ENCODE measurements at regions of chr6 and their contacts with region 1.

Region 1: GRCh38 chr6:140500849-140501248 is 1126.4 kb upstream of the CITED2 start:
- DNase-seq: no peak
- ATAC-seq: no peak

Region 2: GRCh38 chr6:140138311-140139010 is 362.4 kb before region 1 on chr6:
- intact Hi-C with region 1: no loop called
- DNase-seq: no peak
- ATAC-seq: peak; percentile 39

Region 3: GRCh38 chr6:140289186-140289585 is 211.7 kb before region 1 on chr6:
- intact Hi-C with region 1: no loop called
- DNase-seq: no peak
- ATAC-seq: no peak

Region 4: DNA sequence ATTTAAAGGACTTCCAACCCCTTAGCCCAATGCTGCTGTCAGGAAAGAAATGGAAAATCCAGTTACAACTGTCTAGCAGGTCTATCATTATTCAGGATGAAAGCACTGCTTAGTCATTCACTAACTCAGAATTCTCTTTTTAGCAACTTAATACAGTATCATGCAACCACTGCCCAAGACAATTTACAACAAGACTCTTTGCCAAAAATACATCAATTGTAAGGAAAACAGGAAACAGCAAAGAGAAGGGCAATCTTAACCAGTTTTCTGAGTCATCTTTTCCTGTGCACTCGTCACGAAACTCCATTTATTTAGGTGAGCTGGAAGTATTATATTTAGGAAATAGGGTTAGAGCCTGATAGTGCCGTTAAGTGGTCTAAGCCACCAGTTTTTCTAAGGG is 71.3 kb after region 1 on chr6:
- intact Hi-C with region 1: loop called (anchors 2 kb)
- DNase-seq: no peak
- ATAC-seq: no peak

Region 5: GRCh38 chr6:140650115-140650514 is 149.3 kb after region 1 on chr6:
- intact Hi-C with region 1: no loop called
- DNase-seq: no peak
- ATAC-seq: no peak